ENCODE measurements at regions of chr12 and their contacts with region 1.

Region 1: GRCh38 chr12:53220801-53221202 is 11.2 kb downstream of the RARG start:
- DNase-seq: peak; percentile 91
- ATAC-seq: peak; percentile 68
- H3K4me3 Mint-ChIP-seq: peak overlapping the region; percentile 97
- H3K27ac Mint-ChIP-seq: peak overlapping the region; percentile 90
- H3K4me1 Mint-ChIP-seq: peaks cover 78% of the 10 kb centered on the region
- H3K27me3 Mint-ChIP-seq: no peaks in the 10 kb centered on the region

Region 2: DNA sequence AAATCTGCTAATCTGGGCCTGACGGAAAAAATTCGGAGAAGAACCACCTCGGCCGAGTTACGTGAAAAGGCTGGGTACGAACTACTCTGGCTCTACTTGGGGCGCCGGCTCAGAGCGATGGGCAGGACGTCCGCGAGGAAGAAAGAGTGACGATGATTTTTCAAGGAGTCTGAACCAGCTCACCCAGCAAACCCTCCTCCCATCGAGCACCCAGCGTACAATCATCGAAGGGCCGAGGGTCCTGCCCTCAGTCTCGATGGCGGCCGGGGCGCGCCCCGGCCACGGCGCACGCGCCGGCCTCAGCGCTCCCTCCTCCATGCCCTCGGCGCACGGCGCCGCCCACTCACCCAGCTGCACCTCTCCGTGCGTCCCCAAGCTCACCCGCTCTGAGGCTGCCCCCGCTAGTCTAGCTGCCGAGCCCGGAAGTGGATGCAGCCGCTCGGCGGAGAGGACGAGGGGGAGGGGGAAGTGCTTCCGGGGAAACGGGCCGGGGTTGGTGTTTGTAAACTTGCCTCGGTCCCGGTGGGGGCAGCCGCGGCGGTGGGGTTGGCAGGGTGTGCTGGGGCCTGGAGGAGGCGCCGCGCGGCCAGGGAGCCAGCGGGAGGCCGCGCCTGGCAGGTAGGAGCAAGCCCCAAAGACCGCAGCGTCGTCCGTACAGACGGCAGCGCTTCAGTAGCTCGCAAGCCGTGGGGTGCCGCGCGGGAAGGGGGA is 40.4 kb before region 1 on chr12 and contains the starts of genes CSAD and ZNF740:
- CTCF ChIA-PET with region 1: interaction called, 3 read pairs
- POLR2A ChIA-PET with region 1: interaction called, 11 read pairs
- DNase-seq: peak; percentile 98
- ATAC-seq: peak; percentile 97
- H3K4me3 Mint-ChIP-seq: peak within 1 kb of the TSS; percentile 86
- H3K27ac Mint-ChIP-seq: peak within 1 kb of the TSS; percentile 98
- H3K4me1 Mint-ChIP-seq: peaks cover 50% of the 10 kb centered on the region
- H3K27me3 Mint-ChIP-seq: no peaks in the 10 kb centered on the region
- total RNA-seq, gene CSAD: 15.7 to 17.0 TPM
- total RNA-seq, gene ZNF740: 28.2 to 31.4 TPM

Region 3: GRCh38 chr12:53205747-53206419 is 14.9 kb before region 1 on chr12:
- CTCF ChIA-PET with region 1: interaction called, 22 read pairs
- POLR2A ChIA-PET with region 1: interaction called, 46 read pairs
- DNase-seq: peak; percentile 90
- ATAC-seq: peak; percentile 71
- H3K4me3 Mint-ChIP-seq: peak overlapping the region; percentile 83
- H3K27ac Mint-ChIP-seq: peak overlapping the region; percentile 86
- H3K4me1 Mint-ChIP-seq: peaks cover 80% of the 10 kb centered on the region
- H3K27me3 Mint-ChIP-seq: no peaks in the 10 kb centered on the region

Region 4: GRCh38 chr12:53231826-53232645 is 11.2 kb after region 1 on chr12 and contains the start of gene RARG:
- CTCF ChIA-PET with region 1: interaction called, 10 read pairs
- POLR2A ChIA-PET with region 1: interaction called, 12 read pairs
- DNase-seq: peak; percentile 74
- ATAC-seq: peak; percentile 76
- H3K4me3 Mint-ChIP-seq: peak within 1 kb of the TSS; percentile 83
- H3K27ac Mint-ChIP-seq: peak within 1 kb of the TSS; percentile 76
- H3K4me1 Mint-ChIP-seq: peaks cover 66% of the 10 kb centered on the region
- H3K27me3 Mint-ChIP-seq: no peaks in the 10 kb centered on the region
- total RNA-seq, gene RARG: 44.1 to 45.9 TPM

Region 5: DNA sequence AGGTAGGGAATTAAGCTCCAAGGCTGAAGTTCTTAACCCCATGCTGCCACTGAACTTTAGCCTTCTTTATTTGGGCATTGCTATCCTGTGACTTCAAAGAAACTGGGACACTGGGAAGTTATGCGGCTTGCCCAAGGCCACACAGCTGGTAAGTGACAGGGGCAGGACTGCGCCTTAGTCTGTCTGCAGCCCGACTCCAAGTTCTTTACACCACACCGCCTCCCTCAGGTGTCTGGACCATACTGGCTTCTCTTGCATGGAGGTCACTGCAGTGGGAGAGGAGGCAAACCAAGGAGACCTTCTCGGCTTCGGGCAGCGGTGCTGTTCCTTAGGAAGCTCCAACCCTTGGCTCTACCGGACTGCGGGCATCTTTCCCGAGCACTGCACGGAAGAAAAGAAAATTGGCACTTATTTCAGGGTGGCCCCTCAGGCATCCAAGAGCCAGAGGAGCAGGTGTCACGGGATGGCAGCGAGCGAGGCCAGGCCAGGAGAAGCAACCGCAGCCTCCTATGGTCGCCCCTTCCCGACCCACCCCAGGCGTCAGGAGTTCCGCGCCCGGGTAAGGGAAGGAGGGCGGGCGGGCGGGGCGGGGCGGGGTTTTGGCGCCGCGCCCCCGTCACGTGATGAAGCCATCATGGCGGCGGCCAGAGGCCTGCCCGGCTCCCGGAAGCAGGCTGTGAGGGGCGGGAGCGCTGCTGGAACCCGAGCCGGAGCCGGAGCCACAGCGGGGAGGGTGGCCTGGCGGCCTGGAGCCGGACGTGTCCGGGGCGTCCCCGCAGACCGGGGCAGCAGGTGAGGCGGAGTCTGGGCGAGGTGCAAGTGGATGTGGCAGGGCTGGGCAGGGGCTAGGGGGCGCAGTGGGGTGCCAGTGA is 30.9 kb after region 1 on chr12:
- CTCF ChIA-PET with region 1: interaction called, 188 read pairs
- POLR2A ChIA-PET with region 1: interaction called, 5 read pairs
- DNase-seq: peak; percentile 74
- ATAC-seq: peak; percentile 87
- H3K4me3 Mint-ChIP-seq: peak overlapping the region; percentile 99
- H3K27ac Mint-ChIP-seq: peak overlapping the region; percentile 94
- H3K4me1 Mint-ChIP-seq: peaks cover 54% of the 10 kb centered on the region
- H3K27me3 Mint-ChIP-seq: peaks cover 3% of the 10 kb centered on the region

Region 6: DNA sequence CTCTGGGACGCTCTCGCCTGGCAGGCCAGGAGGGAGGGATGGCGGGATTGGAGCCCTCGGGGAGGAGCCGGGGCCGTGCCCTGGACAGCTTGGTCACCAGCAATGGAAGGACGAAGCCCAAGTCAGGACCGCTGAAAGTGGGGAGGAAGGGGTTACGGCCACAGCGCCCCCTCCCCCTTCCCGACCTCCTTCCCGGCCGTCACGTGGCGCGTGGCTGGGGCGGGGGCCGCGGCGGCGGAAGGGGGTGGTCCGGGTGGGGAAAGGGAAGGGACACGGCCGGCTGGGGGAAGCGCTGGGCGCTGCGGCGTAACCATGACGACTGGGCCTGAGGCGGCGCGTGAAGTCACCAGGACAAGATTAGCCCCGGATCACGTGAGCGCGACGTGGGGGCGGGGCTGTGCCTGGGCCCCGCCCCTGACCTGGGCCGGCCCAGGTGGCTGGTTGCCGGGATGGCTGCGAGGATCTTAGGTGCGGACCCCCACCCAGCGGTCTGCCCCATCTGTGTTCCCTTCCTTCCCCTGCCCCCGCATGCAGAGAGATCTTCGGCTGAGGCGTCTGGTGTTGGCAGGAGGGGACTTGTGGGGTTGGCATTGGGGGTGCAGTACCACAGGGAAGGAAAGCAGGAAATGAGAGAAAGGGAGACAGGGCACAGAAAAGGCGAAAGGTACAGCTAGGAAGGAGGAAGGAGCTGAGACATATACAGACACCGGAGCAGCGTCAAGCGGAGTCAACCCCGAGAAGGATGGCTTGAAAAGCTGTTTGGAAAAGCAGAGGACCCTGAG is 272.2 kb after region 1 on chr12:
- CTCF ChIA-PET with region 1: no interaction called
- POLR2A ChIA-PET with region 1: no interaction called
- DNase-seq: peak; percentile 91
- ATAC-seq: peak; percentile 90
- H3K4me3 Mint-ChIP-seq: peak overlapping the region; percentile 82
- H3K27ac Mint-ChIP-seq: peak overlapping the region; percentile 70
- H3K4me1 Mint-ChIP-seq: peaks cover 38% of the 10 kb centered on the region
- H3K27me3 Mint-ChIP-seq: no peaks in the 10 kb centered on the region

Measured in activated CD8-positive, alpha-beta T cell treated with anti-CD3 and anti-CD28 coated beads, Interleukin-2, amount 10 ng/mL, durations not matched to agents 7 days and 5 days (primary cell).